ENCODE measurements at regions of chr6 and their contacts with region 1.

Region 1: DNA sequence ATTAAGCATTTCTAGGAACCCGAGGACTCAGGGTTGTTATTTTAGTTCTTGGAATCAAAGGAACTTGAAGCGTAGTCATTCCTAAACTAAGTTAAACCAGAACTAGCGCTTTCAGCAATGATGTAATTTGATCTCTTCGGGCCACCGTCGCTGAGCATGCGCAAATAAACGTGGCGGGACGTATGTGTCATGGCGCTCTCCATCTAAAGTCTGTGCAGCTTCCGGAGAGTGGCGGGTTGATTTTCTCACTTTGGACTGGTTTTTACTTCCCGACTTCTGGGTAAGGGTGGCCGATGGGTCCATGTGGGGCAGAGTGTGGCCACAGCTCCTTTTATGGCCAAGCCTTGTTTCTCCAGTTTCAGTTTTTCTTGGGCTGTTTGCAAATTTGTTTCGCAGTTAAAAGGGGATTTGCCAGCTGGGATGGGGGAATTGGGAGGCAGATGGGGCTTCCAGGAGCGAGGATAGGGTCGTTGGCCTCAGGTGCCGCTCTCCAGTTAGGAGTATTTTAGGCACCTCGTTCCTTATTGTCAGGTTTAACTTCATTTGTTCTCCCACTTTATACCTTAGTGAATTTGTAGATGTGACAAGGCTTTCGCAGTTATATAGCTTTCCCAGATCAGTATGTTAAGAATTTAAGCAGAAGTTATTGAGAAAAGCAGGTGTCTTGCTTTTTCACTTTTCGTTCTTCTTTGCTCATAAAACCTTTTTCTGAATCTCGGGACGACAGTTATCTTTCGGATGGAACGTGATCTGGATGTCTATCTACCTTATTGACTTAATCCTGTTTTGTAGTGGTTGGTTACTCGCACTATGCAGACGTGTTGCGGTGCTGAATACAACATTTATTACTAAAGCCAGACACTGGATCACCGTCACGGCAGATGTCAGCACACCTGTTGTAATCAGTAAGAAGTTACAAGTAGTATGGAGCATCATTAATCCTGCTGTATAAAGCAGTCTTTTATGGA is at the start of gene CDKAL1:
- DNase-seq: peak; percentile 87 to 91 (median 87)
- H3K4me3 ChIP-seq: peak within 1 kb of the TSS; percentile 76 to 98 (median 88)
- H3K4me3 Mint-ChIP-seq: peak within 1 kb of the TSS; percentile 90 to 96
- H3K27ac ChIP-seq: peak within 1 kb of the TSS; percentile 89 to 94
- H3K27ac Mint-ChIP-seq: peak within 1 kb of the TSS; percentile 91 to 97 (median 96)
- H3K4me1 ChIP-seq: peaks cover 11 to 22% of the 10 kb centered on the region in 2 donors
- H3K4me1 Mint-ChIP-seq: peaks cover 12% of the 10 kb centered on the region
- H3K27me3 ChIP-seq: no peaks in the 10 kb centered on the region
- H3K27me3 Mint-ChIP-seq: peaks cover 0 to 1% (median 0%) of the 10 kb centered on the region in 3 donors
- CTCF ChIP-seq: no peak
- polyA plus RNA-seq, gene CDKAL1: 3.2 to 12.4 (median 8.3) TPM

Region 2: DNA sequence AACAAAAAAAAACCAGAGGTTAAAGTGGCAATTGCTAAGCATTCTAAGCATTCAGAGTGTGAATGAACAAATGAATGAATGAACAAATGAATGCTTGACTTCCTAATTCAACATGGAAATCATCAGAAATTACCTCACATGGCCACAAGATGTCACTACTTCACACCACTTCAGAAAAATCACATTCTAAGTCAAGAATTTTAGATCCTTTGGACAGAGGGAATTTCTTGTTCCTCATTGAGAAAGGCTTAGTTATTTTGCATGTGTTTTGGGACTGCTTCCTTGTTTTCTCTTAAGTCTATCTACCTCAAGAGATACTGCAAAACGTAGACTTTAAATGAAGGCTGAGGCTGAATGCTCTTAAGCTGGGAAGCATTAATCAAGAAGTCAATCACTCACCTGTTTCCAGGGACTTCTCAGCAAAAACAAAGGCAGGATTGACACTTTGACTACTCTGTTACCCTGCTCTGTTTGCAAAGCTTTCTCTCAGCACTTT is 442.5 kb before region 1 on chr6:
- intact Hi-C with region 1: loop called in 1 of 2 experiments (anchors 10 kb)
- DNase-seq: peak; percentile 28 to 38 (median 30)
- H3K4me3 ChIP-seq: no peak overlapping the region
- H3K4me3 Mint-ChIP-seq: no peak overlapping the region
- H3K27ac ChIP-seq: no peak overlapping the region
- H3K27ac Mint-ChIP-seq: no peak overlapping the region
- H3K4me1 ChIP-seq: no peaks in the 10 kb centered on the region
- H3K4me1 Mint-ChIP-seq: peaks cover 4% of the 10 kb centered on the region
- H3K27me3 ChIP-seq: no peaks in the 10 kb centered on the region
- H3K27me3 Mint-ChIP-seq: peaks cover 0 to 2% (median 0%) of the 10 kb centered on the region in 3 donors
- CTCF ChIP-seq: peak; percentile 81

Region 3: GRCh38 chr6:20291764-20292580 is 242.6 kb before region 1 on chr6:
- intact Hi-C with region 1: loop called (anchors 2 kb)
- DNase-seq: peak; percentile 66 to 74 (median 72)
- H3K4me3 ChIP-seq: no peak overlapping the region
- H3K4me3 Mint-ChIP-seq: peak overlapping the region in 1 of 2 donors; percentile 61
- H3K27ac ChIP-seq: no peak overlapping the region
- H3K27ac Mint-ChIP-seq: peak overlapping the region in 1 of 7 donors; percentile 58
- H3K4me1 ChIP-seq: no peaks in the 10 kb centered on the region
- H3K4me1 Mint-ChIP-seq: peaks cover 5% of the 10 kb centered on the region
- H3K27me3 ChIP-seq: no peaks in the 10 kb centered on the region
- H3K27me3 Mint-ChIP-seq: peaks cover 0 to 2% (median 0%) of the 10 kb centered on the region in 3 donors
- CTCF ChIP-seq: peak; percentile 97

Region 4: GRCh38 chr6:20319520-20320357 is 214.8 kb before region 1 on chr6:
- intact Hi-C with region 1: loop called in 1 of 2 experiments (anchors 10 kb)
- DNase-seq: peak; percentile 94 to 96 (median 96)
- H3K4me3 ChIP-seq: peak overlapping the region; percentile 28 to 82 (median 70)
- H3K4me3 Mint-ChIP-seq: peak overlapping the region; percentile 76 to 91
- H3K27ac ChIP-seq: peak overlapping the region; percentile 81 to 90
- H3K27ac Mint-ChIP-seq: peak overlapping the region; percentile 93 to 98 (median 94)
- H3K4me1 ChIP-seq: peaks cover 9 to 13% of the 10 kb centered on the region in 2 donors
- H3K4me1 Mint-ChIP-seq: peaks cover 15% of the 10 kb centered on the region
- H3K27me3 ChIP-seq: no peaks in the 10 kb centered on the region
- H3K27me3 Mint-ChIP-seq: peaks cover 0 to 1% (median 0%) of the 10 kb centered on the region in 3 donors
- CTCF ChIP-seq: no peak

Region 5: DNA sequence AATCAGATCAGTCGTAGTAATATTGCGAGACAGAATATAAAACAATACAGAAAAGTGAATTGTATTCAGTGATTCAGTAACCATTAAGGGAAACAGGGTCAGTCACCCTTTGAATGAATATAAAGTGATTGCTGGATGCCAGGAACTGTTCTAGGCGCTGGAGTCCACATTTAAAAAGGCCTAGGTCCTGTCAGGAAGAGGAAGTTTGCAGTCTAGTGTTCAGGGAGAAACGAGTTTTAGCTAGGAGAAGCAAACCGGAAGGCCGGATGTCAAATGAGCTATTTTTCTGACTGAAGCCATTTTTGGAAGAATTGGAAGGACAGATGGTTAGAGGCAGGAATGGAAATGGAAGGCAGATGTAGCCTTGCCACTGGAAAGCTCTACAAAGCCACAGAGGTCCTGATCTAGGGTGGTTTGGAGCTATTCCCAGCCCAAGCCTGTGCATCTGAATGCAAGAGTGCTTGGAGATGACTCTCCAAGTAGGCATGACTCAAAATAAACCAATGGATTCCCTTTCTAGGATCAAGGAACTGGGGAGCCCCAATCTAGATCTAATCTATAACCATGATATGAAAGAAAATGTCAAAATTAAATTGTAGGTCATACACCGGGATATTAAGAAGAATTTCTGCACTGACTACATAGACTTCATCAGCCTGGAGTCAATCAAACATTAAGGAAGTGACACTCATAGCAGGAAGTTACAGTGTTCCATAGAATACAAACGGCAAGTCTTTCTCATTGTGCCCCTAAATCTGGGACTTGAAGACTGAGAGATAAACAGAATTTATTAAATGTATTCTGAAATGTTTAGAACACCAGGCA is 37.2 kb before region 1 on chr6:
- intact Hi-C with region 1: no loop called
- DNase-seq: peak in 2 of 3 donors; percentile 15 to 39
- H3K4me3 ChIP-seq: peak overlapping the region in 1 of 3 experiments; percentile 41
- H3K4me3 Mint-ChIP-seq: peak overlapping the region; percentile 18 to 75
- H3K27ac ChIP-seq: peak overlapping the region in 1 of 2 donors; percentile 63
- H3K27ac Mint-ChIP-seq: peak overlapping the region in 6 of 7 donors; percentile 50 to 89 (median 70)
- H3K4me1 ChIP-seq: peaks cover 37 to 38% of the 10 kb centered on the region in 2 donors
- H3K4me1 Mint-ChIP-seq: peaks cover 40% of the 10 kb centered on the region
- H3K27me3 ChIP-seq: no peaks in the 10 kb centered on the region
- H3K27me3 Mint-ChIP-seq: no peaks in the 10 kb centered on the region
- CTCF ChIP-seq: no peak

Region 6: GRCh38 chr6:21295506-21296240 is 761.1 kb after region 1 on chr6:
- intact Hi-C with region 1: no loop called
- DNase-seq: no peak
- H3K4me3 ChIP-seq: no peak overlapping the region
- H3K4me3 Mint-ChIP-seq: no peak overlapping the region
- H3K27ac ChIP-seq: no peak overlapping the region
- H3K27ac Mint-ChIP-seq: no peak overlapping the region
- H3K4me1 ChIP-seq: no peaks in the 10 kb centered on the region
- H3K4me1 Mint-ChIP-seq: no peaks in the 10 kb centered on the region
- H3K27me3 ChIP-seq: no peaks in the 10 kb centered on the region
- H3K27me3 Mint-ChIP-seq: peaks cover 0 to 2% (median 0%) of the 10 kb centered on the region in 3 donors
- CTCF ChIP-seq: no peak